Common myeloid progenitor, CD34-positive (primary cell): ENCODE measurements at regions of chr1 and their contacts with region 1.

Region 1: GRCh38 chr1:25099343-25099951 is 132.9 kb downstream of the SYF2 start:
- DNase-seq: peak in 2 of 3 donors; percentile 76 to 81
- H3K4me3 ChIP-seq: peak overlapping the region in 1 of 7 experiments; percentile 19
- H3K27ac ChIP-seq: no peak overlapping the region
- H3K4me1 ChIP-seq: peaks cover 13 to 88% (median 38%) of the 10 kb centered on the region in 4 experiments
- H3K27me3 ChIP-seq: no peaks in the 10 kb centered on the region

Region 2: GRCh38 chr1:24786191-24786590 is 313.3 kb before region 1 on chr1:
- CTCF ChIA-PET with region 1: no interaction called
- POLR2A ChIA-PET with region 1: no interaction called
- DNase-seq: peak in 2 of 3 donors; percentile 28 to 29
- H3K4me3 ChIP-seq: no peak overlapping the region
- H3K27ac ChIP-seq: no peak overlapping the region
- H3K4me1 ChIP-seq: peaks cover 0 to 6% (median 6%) of the 10 kb centered on the region in 4 experiments
- H3K27me3 ChIP-seq: no peaks in the 10 kb centered on the region

Region 3: DNA sequence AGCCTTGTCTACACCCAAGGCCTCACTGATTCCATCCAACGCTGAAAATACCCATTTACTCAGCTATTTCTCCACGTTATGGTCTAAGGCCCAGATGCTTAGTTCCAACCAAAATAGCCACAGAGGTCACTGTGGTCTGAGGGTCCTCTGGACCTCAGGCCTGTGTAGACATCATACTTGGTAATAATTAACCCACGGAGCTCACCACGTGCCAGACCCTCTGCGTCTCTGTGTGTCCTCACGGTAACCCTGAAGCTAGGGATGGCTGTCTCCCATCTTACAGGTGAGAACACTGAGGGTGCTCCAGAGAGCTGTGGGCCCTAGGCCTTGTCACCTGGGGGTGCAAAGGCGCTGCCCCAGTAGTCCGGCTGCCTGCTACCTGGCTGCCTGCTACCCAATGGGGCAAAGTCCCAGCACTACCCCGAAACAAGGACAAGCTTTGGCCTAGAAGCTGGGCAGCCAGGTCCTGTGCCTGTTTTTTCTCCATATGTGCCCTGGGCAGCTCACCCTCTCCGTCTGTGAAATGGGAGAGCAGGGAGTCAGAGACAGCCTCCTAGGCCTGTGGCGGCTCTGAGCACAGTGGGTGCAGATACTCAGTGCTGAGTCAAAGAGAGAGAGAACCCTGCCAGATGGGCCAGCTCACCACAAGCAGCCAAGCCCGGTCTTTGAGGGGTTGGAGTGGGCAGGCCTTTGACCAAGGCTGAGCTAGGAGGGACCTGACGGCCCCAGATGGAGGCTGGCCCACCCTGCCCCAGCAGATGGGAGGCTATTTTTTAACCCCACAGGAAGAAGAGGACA is 152.4 kb before region 1 on chr1:
- CTCF ChIA-PET with region 1: interaction called, 10 read pairs
- POLR2A ChIA-PET with region 1: no interaction called
- DNase-seq: peak in 1 of 3 donors; percentile 38
- H3K4me3 ChIP-seq: no peak overlapping the region
- H3K27ac ChIP-seq: no peak overlapping the region
- H3K4me1 ChIP-seq: peaks cover 0 to 70% (median 14%) of the 10 kb centered on the region in 4 experiments
- H3K27me3 ChIP-seq: no peaks in the 10 kb centered on the region

Region 4: DNA sequence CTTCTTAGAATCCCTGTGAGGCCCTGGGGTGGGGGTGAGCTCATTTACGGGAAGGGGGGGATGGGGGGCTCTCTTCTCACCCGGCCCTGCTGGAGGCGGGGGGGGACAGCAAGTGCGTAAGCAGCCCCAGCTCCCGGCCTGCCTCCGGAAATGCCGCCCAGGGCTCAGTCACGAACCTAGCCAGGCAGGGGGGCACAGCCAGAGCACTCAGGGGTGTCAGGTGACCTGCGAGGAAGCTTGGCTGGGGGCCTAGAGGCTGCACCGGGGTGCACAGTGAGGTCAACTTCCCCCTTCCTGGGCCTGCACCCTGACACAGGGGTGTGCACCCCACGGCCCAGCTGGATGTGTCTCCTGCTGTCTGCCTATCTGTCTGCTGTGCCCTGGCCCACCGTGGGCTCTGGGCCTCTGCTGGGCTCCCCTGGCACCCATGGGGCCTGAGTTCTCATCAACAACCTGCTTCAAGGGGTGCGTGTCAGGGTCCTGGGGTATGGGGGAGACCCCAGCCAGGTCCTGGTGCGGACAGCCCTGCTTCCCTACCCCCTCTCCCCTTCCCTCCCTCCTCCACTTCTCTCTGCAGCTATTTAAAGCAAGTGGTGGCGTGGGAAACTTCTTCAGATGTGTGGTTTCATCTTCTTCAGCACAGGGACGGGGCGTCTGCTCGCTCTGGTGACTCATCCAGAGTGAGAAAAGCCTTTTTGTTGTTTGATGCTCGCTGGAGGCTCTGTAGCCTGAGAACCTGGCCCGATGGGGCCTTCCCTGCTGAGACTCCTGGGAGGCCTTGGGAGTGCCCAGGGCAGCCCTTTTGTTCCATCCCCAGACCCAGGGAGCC is 76.9 kb before region 1 on chr1:
- CTCF ChIA-PET with region 1: interaction called, 11 read pairs
- POLR2A ChIA-PET with region 1: no interaction called
- DNase-seq: peak; percentile 99
- H3K4me3 ChIP-seq: peak overlapping the region in 4 of 7 experiments; percentile 4 to 57 (median 34)
- H3K27ac ChIP-seq: peak overlapping the region; percentile 97 to 98
- H3K4me1 ChIP-seq: peaks cover 15 to 95% (median 91%) of the 10 kb centered on the region in 4 experiments
- H3K27me3 ChIP-seq: no peaks in the 10 kb centered on the region

Region 5: DNA sequence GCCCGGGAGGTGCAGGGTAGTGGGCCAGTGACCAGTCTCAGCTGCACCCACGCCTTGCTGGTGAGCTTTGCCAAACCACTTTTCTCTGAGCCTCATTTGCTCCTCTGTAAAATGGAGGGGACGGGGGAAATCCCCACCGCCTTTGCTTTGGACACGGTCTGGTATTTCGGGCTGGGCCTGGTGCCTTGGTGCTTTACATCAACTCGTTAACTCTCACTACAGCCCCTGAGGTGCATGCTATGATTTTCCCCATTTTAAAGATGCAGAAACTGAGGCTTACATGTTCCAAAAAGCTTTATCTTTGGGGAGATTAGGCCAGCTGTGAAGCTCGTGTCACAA is 53.3 kb before region 1 on chr1:
- CTCF ChIA-PET with region 1: interaction called, 11 read pairs
- POLR2A ChIA-PET with region 1: no interaction called
- DNase-seq: no peak
- H3K4me3 ChIP-seq: no peak overlapping the region
- H3K27ac ChIP-seq: no peak overlapping the region
- H3K4me1 ChIP-seq: peaks cover 0 to 47% (median 13%) of the 10 kb centered on the region in 4 experiments
- H3K27me3 ChIP-seq: no peaks in the 10 kb centered on the region